ENCODE measurements at regions of chr12 and their contacts with region 1.

Region 1: GRCh38 chr12:59087077-59087673 is 166.9 kb upstream of the LRIG3 start:
- DNase-seq: peak; percentile 55
- H3K4me3 ChIP-seq: no peak overlapping the region
- H3K27ac ChIP-seq: no peak overlapping the region
- H3K4me1 ChIP-seq: peaks cover 12% of the 10 kb centered on the region
- H3K27me3 ChIP-seq: no peaks in the 10 kb centered on the region
- CTCF ChIP-seq: peak; percentile 54 to 59
- POLR2A ChIP-seq: no peak

Region 2: GRCh38 chr12:57983146-57983857 is 1103.9 kb before region 1 on chr12:
- CTCF ChIA-PET with region 1: interaction called, 6 read pairs
- POLR2A ChIA-PET with region 1: no interaction called
- dilution Hi-C with region 1: no loop called
- intact Hi-C with region 1: loop called (anchors 1 kb)
- DNase-seq: peak; percentile 72
- H3K4me3 ChIP-seq: no peak overlapping the region
- H3K27ac ChIP-seq: no peak overlapping the region
- H3K4me1 ChIP-seq: no peaks in the 10 kb centered on the region
- H3K27me3 ChIP-seq: peaks cover 0 to 3% of the 10 kb centered on the region in 2 experiments
- CTCF ChIP-seq: peak; percentile 25 to 55
- POLR2A ChIP-seq: no peak

Region 3: GRCh38 chr12:58873486-58873885 is 213.7 kb before region 1 on chr12:
- CTCF ChIA-PET with region 1: no interaction called
- POLR2A ChIA-PET with region 1: no interaction called
- dilution Hi-C with region 1: no loop called
- intact Hi-C with region 1: no loop called
- DNase-seq: no peak
- H3K4me3 ChIP-seq: no peak overlapping the region
- H3K27ac ChIP-seq: no peak overlapping the region
- H3K4me1 ChIP-seq: no peaks in the 10 kb centered on the region
- H3K27me3 ChIP-seq: no peaks in the 10 kb centered on the region
- CTCF ChIP-seq: no peak
- POLR2A ChIP-seq: no peak

Region 4: DNA sequence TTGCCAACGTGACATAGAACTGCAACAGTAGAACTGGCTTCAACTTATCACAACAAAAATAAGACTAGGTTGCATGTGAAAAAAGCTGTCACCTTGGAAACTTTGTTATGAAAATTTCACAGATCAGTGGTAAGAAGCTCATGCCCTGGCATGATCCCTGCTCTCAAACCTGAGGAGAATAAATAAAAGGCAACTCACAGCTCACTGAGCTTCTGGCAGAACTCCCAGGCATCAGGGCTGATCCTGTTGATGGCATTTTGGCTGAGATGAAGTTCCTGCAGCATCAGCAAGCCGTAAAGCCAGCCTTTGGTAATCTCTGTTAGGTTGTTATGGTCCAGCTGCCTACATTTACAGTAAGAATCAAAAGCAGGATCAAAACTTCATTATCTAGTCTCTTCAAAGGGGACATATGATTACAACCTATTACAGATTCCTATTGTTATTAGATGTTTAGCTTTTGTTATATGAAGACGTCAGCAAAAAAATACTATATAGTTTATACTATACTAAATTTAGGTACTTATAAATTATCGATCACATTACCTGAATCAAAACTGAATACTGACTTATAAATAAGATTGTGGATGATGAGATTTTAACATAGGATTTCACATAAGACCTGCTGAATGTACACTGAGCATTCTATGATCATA is 198.9 kb before region 1 on chr12:
- CTCF ChIA-PET with region 1: interaction called, 11 read pairs
- POLR2A ChIA-PET with region 1: no interaction called
- dilution Hi-C with region 1: no loop called
- intact Hi-C with region 1: no loop called
- DNase-seq: peak; percentile 39
- H3K4me3 ChIP-seq: no peak overlapping the region
- H3K27ac ChIP-seq: no peak overlapping the region
- H3K4me1 ChIP-seq: no peaks in the 10 kb centered on the region
- H3K27me3 ChIP-seq: no peaks in the 10 kb centered on the region
- CTCF ChIP-seq: no peak
- POLR2A ChIP-seq: no peak

Region 5: GRCh38 chr12:59056966-59057365 is 30.2 kb before region 1 on chr12:
- CTCF ChIA-PET with region 1: no interaction called
- POLR2A ChIA-PET with region 1: no interaction called
- dilution Hi-C with region 1: no loop called
- intact Hi-C with region 1: no loop called
- DNase-seq: peak; percentile 29
- H3K4me3 ChIP-seq: no peak overlapping the region
- H3K27ac ChIP-seq: peak overlapping the region; percentile 76
- H3K4me1 ChIP-seq: peaks cover 26% of the 10 kb centered on the region
- H3K27me3 ChIP-seq: no peaks in the 10 kb centered on the region
- CTCF ChIP-seq: no peak
- POLR2A ChIP-seq: no peak

Region 6: GRCh38 chr12:59067083-59067482 is 20.1 kb before region 1 on chr12:
- CTCF ChIA-PET with region 1: interaction called, 15 read pairs
- POLR2A ChIA-PET with region 1: no interaction called
- dilution Hi-C with region 1: no loop called
- intact Hi-C with region 1: no loop called
- DNase-seq: peak; percentile 76
- H3K4me3 ChIP-seq: no peak overlapping the region
- H3K27ac ChIP-seq: no peak overlapping the region
- H3K4me1 ChIP-seq: peaks cover 32% of the 10 kb centered on the region
- H3K27me3 ChIP-seq: no peaks in the 10 kb centered on the region
- CTCF ChIP-seq: no peak
- POLR2A ChIP-seq: no peak

Region 7: DNA sequence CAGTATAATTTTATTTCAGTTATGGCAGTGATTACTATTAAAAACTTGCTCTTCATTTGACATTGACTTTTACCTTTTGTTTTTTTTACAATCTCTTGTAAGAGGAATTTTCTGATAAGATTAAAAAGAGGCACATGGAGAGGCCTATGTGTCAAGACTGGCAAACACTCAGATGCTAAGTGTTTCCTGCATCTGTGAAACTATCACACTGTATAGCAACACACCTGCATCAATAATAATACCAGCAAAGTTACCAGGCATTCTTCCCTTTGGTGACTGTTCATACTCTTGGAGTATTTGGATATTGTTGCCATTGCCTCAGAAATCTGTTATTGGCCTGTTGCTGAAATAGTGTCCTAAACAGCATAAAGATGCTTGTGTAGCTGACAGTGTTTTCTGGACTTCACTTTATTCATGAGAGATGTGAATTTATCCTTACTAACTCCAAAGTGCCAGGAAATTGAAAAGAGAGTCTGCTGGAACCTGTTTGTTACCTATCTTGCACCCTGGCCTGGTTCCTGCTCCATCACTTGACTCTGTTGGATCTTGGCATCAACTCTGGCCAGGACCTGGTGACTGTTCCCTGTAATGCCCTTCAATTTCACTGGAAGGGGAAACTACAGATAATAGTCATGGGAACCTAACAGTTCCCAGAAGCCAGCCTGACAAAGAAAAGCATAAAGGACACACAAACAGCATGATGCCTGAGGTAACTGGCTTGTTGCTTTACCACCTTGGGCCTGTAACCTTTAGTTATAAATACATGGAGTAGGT is 528.4 kb after region 1 on chr12:
- CTCF ChIA-PET with region 1: no interaction called
- POLR2A ChIA-PET with region 1: no interaction called
- dilution Hi-C with region 1: no loop called
- intact Hi-C with region 1: no loop called
- DNase-seq: no peak
- H3K4me3 ChIP-seq: no peak overlapping the region
- H3K27ac ChIP-seq: no peak overlapping the region
- H3K4me1 ChIP-seq: no peaks in the 10 kb centered on the region
- H3K27me3 ChIP-seq: no peaks in the 10 kb centered on the region
- CTCF ChIP-seq: no peak
- POLR2A ChIP-seq: no peak

Measured in endothelial cell of umbilical vein (primary cell).